ENCODE measurements at regions of chr2 and their contacts with region 1.

Region 1: DNA sequence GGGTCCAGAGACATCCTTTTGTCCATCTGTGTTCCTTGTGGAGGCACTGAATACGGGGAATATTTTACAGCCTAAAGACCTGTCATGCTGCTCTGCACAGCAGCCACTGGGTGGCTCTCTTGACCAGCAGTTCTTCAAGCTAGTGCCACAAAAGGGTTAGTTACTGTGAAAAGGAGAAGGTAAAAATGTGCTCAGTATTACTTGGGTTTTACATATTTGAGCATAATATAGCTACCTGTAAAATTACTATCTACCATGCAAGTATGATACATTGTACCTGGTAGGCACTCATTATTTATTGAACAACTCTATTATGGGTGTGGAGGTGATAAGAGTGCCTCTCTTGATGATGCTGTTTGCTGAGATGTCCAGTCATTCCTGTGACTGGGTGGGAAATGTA is 23.6 kb downstream of the FZD5 start:
- DNase-seq: peak; percentile 45
- H3K4me3 Mint-ChIP-seq: no peak overlapping the region
- H3K27ac Mint-ChIP-seq: no peak overlapping the region
- H3K4me1 Mint-ChIP-seq: no peaks in the 10 kb centered on the region
- H3K27me3 Mint-ChIP-seq: no peaks in the 10 kb centered on the region

Region 2: GRCh38 chr2:207974216-207974605 is 228.1 kb after region 1 on chr2:
- CTCF ChIA-PET with region 1: interaction called, 25 read pairs
- POLR2A ChIA-PET with region 1: no interaction called
- DNase-seq: no peak
- H3K4me3 Mint-ChIP-seq: no peak overlapping the region
- H3K27ac Mint-ChIP-seq: no peak overlapping the region
- H3K4me1 Mint-ChIP-seq: peaks cover 8% of the 10 kb centered on the region
- H3K27me3 Mint-ChIP-seq: no peaks in the 10 kb centered on the region

Region 3: DNA sequence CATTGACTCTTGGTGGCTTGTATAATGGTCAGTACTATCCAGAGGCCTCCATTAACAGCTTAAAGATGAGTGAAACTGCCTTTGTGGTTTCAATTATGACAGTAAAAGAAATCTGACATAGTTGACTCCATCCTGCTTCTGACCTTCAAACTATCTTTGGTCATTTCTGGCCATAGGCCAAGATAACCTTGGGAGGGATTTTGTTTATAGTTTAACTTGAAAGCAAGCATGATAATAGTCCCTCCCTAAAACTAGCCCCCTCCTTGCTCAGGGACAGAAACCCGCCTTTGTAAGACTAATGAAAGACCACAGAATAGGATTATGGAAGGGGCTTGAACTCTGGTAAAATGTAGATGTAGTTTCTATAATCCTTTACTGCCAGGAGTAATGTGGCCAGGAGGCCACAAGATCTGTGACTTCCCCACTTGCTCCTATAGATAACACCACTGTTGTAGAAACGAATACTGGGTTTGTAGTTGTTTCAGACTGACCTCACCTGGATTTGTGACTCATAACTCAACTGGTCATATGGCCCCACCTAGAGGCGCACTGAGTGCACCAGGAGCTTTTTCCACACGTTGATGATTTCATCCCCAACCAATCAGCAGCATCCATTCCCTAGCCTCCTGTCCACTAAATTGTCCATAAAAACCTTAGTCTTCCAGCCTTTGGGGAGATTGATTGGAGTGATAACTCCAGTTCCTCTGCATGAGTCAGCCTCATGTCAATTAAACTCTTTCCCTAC is 287.8 kb after region 1 on chr2:
- CTCF ChIA-PET with region 1: interaction called, 96 read pairs
- POLR2A ChIA-PET with region 1: no interaction called
- DNase-seq: peak; percentile 41
- H3K4me3 Mint-ChIP-seq: no peak overlapping the region
- H3K27ac Mint-ChIP-seq: no peak overlapping the region
- H3K4me1 Mint-ChIP-seq: peaks cover 6% of the 10 kb centered on the region
- H3K27me3 Mint-ChIP-seq: peaks cover 2% of the 10 kb centered on the region

Region 4: DNA sequence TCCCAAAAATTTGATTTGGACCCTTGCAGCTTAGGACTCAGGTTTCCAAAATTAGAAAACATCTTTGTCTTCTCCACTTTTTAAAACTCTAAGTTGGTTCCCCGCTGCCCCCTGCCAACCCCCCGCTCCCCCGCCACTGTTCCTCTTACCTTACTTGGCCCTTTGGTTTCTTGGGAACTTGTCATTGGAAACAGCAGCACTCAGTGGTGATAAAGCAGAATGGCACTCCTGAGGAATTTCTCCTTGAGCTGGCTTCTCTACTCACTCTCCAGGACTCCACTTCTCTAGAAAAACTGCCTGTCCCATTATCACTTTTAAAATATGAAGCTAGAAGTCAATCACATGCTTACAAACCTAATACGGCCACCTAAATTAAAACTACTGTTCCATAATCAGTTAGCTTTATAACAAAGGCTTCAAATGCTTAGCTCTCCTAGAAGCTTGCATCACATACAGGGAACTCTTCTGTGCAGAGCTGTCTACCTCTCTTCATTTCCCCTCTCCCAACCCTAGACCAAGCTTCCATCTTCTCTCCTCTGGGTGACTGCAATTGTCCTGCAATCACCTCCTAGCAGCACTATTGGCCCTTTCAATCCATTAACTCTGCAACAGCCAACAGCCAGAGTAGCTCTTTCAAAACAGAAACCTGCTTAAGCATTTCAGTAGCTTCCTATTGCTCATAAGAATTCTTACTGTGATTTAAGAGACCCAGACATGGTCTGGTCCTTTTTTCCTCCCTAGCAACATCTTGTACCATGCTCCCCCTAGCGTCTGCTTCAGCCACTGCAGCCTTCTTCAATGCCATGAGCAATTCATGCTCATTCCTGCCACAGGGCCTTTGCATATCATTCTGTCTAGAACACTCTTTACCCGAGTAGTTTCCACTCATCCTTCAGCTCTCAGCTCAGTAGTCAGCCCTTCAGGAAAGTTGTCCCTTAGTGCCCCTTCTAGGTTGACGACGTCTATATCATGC is 294.4 kb after region 1 on chr2:
- CTCF ChIA-PET with region 1: interaction called, 96 read pairs
- POLR2A ChIA-PET with region 1: interaction called, 3 read pairs
- DNase-seq: peak; percentile 77
- H3K4me3 Mint-ChIP-seq: no peak overlapping the region
- H3K27ac Mint-ChIP-seq: no peak overlapping the region
- H3K4me1 Mint-ChIP-seq: no peaks in the 10 kb centered on the region
- H3K27me3 Mint-ChIP-seq: peaks cover 10% of the 10 kb centered on the region

Region 5: DNA sequence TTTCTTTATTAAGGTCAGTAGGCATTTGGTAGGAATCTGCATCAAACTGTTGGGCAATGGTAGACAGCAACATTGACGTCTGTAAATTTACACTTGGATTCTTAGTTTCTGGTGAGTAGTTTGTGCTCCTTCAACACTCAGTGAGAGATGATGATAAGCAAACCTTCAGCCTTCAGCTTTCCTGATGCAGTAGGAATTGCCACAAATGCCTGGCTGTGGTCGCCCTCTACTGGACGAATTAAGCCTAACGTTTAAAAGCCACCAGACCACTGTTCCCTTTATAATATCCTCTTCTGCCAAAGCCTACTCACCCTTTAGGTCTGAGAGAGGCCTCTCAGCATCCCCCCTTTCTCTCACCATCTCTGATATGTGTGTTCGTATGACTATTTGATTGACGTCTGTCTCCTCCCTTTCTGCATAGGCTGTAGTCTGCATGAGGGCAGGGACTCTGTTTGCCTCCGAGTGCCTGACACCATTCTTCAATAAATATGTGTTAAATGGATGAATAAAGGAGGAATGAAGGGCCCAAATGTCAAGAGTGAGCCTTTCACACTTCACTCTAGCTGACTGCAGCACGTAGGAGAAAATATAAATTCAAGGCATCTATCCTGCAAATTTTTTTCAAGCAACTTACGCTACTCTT is 326.2 kb after region 1 on chr2:
- CTCF ChIA-PET with region 1: interaction called, 23 read pairs
- POLR2A ChIA-PET with region 1: no interaction called
- DNase-seq: peak; percentile 57
- H3K4me3 Mint-ChIP-seq: no peak overlapping the region
- H3K27ac Mint-ChIP-seq: no peak overlapping the region
- H3K4me1 Mint-ChIP-seq: no peaks in the 10 kb centered on the region
- H3K27me3 Mint-ChIP-seq: peaks cover 12% of the 10 kb centered on the region

Measured in activated CD4-positive, alpha-beta memory T cell treated with anti-CD3 and anti-CD28 coated beads, Interleukin-2, amount 10 ng/mL, durations not matched to agents 7 days and 5 days (primary cell).